WTC11 (cell line): ENCODE measurements at regions of chr7 and their contacts with region 1.

Region 1: DNA sequence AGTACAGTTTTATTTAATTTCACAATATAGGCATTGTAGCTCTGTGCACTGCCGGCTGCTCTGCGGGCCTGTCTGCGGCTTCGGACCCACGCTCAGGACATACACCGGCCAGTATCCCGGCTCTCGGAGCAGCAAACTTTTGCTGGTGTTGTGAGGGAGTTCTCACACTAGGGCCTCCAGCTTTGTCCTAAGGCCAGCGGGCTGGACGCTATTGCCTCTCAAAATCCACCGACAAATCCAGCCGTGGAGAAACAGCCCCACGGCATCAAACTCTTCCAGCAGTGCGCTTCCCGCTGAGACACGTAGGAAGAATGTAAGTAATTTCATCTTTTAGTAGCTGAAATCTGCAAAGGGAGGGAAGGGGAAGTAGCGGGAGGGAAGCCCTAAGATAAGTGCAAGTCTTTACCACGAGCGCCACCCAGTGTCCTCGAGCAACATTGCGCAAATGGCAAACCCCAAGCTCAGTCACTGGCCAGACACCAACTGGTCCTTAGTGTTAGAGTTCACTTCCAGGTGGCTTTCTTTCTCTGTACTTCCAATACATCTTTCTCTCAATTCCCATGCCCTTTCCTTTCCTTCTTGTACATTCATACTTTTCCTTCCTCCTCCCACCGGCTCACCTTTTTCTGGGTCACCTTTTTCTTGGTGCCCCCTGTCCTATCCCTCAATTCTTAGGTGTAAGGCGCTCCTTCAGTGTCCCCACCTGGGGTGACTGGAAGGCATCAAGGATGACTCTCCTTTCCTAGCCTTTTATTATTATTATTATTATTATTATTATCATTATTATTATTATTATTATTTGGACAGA is 3.0 kb upstream of the DLX5 start:
- DNase-seq: peak; percentile 77
- ATAC-seq: peak; percentile 55
- H3K4me3 Mint-ChIP-seq: peak overlapping the region; percentile 66
- H3K27ac Mint-ChIP-seq: no peak overlapping the region
- H3K4me1 Mint-ChIP-seq: peaks cover 49% of the 10 kb centered on the region
- H3K27me3 Mint-ChIP-seq: peaks cover 93% of the 10 kb centered on the region
- CTCF ChIP-seq: peak; percentile 80

Region 2: GRCh38 chr7:96414931-96415292 is 612.7 kb before region 1 on chr7:
- CTCF ChIA-PET with region 1: interaction called, 15 read pairs
- POLR2A ChIA-PET with region 1: no interaction called
- DNase-seq: peak; percentile 52
- ATAC-seq: peak; percentile 91
- H3K4me3 Mint-ChIP-seq: no peak overlapping the region
- H3K27ac Mint-ChIP-seq: no peak overlapping the region
- H3K4me1 Mint-ChIP-seq: peaks cover 7% of the 10 kb centered on the region
- H3K27me3 Mint-ChIP-seq: no peaks in the 10 kb centered on the region; the same call in 1 of the 2 replicates
- CTCF ChIP-seq: peak; percentile 55

Region 3: GRCh38 chr7:96996105-96996957 is 31.3 kb before region 1 on chr7:
- CTCF ChIA-PET with region 1: interaction called, 11 read pairs
- POLR2A ChIA-PET with region 1: no interaction called
- DNase-seq: no peak
- ATAC-seq: peak; percentile 13
- H3K4me3 Mint-ChIP-seq: peak overlapping the region; percentile 41
- H3K27ac Mint-ChIP-seq: no peak overlapping the region
- H3K4me1 Mint-ChIP-seq: peaks cover 72% of the 10 kb centered on the region
- H3K27me3 Mint-ChIP-seq: peaks cover 100% of the 10 kb centered on the region
- CTCF ChIP-seq: no peak

Region 4: DNA sequence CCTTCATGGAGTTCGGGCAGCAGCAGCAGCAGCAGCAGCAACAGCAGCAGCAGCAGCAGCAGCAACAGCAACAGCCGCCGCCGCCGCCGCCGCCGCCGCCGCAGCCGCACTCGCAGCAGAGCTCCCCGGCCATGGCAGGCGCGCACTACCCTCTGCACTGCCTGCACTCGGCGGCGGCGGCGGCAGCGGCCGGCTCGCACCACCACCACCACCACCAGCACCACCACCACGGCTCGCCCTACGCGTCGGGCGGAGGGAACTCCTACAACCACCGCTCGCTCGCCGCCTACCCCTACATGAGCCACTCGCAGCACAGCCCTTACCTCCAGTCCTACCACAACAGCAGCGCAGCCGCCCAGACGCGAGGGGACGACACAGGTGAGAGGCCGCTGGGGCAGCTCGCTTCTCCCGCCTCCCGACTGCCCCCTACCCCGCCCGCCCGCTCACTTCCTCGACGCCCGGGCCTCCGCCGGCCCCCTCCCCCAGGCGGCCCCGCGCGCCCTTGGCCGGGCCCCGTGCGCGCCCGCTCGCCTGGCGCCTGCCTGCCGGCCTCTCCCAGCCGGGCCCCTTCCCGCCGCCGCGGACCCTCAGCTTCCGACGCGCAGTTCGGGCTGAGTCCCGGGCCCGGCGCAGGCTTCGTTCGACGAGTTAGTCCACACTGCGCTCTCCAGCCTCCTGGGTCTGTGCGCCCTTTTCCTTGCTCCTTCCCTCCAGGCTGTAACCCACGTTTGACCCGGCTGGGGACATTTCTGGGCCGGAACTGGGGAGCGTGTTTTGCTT is 21.4 kb before region 1 on chr7:
- CTCF ChIA-PET with region 1: interaction called, 15 read pairs
- POLR2A ChIA-PET with region 1: interaction called, 7 read pairs
- DNase-seq: peak; percentile 76
- ATAC-seq: peak; percentile 41
- H3K4me3 Mint-ChIP-seq: peak overlapping the region; percentile 73
- H3K27ac Mint-ChIP-seq: no peak overlapping the region
- H3K4me1 Mint-ChIP-seq: peaks cover 43% of the 10 kb centered on the region
- H3K27me3 Mint-ChIP-seq: peaks cover 97% of the 10 kb centered on the region
- CTCF ChIP-seq: no peak

Region 5: GRCh38 chr7:97016381-97017191 is 11.0 kb before region 1 on chr7:
- CTCF ChIA-PET with region 1: interaction called, 49 read pairs
- POLR2A ChIA-PET with region 1: no interaction called
- DNase-seq: peak; percentile 80
- ATAC-seq: peak; percentile 69
- H3K4me3 Mint-ChIP-seq: peak overlapping the region; percentile 65
- H3K27ac Mint-ChIP-seq: no peak overlapping the region
- H3K4me1 Mint-ChIP-seq: peaks cover 61% of the 10 kb centered on the region
- H3K27me3 Mint-ChIP-seq: peaks cover 100% of the 10 kb centered on the region
- CTCF ChIP-seq: no peak

Region 6: GRCh38 chr7:97064967-97065587 is 37.4 kb after region 1 on chr7:
- CTCF ChIA-PET with region 1: interaction called, 10 read pairs
- POLR2A ChIA-PET with region 1: no interaction called
- DNase-seq: no peak
- ATAC-seq: peak; percentile 93
- H3K4me3 Mint-ChIP-seq: no peak overlapping the region
- H3K27ac Mint-ChIP-seq: no peak overlapping the region
- H3K4me1 Mint-ChIP-seq: no peaks in the 10 kb centered on the region; the same call in 1 of the 2 replicates
- H3K27me3 Mint-ChIP-seq: peaks cover 4% of the 10 kb centered on the region
- CTCF ChIP-seq: peak; percentile 40; the same call in 1 of the 2 replicates